HEK293 (cell line): ENCODE measurements at regions of chr10 and their contacts with region 1.

Region 1: DNA sequence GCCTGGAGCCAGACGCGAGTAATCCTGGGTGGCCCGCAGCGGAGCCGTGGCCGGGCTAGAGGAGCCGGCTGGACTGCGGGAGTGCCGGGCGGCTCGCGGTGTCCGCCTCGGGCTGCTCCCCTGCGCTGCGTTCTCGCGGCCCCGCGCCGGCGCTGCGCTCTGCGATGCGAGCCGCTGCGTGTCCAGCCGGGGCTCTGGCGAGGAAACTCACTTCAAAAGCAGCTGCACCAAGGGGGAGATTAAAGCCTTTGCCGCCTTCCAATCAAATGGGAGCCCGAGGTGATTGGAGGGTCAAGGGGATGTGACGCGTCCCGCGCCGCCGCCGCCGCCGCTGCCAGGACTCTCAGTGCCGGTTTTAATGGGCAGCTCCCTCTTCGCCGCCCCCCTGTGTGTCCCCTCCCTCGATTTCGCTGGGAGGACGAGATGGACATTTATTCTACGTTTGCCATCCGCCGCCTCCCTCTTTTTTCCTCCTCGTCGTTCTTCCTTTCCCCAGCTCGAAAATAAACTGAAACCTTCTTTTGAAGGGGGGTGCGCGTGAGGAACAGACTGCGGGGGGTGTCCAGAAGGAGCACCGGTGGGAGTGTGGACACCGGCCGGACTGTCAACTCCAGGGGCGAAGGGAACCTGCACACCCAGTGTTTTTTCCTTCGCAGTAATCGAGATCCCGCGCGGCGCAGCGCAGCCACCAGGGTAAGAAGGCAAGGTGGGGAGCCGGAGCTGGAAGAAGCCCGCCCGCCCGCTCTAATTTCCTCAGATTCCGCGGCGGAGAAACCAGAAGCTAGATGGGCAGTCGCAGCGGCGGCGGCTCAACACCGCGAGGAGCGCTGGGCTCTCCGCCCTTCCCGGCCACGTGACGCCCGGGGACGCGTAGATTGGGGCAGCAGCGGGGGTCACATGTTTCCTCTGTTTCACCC is at the start of gene ZNF503:
- H3K4me3 ChIP-seq: peak within 1 kb of the TSS; percentile 69
- H3K27ac ChIP-seq: peak within 1 kb of the TSS; percentile 100
- H3K4me1 ChIP-seq: no peaks in the 10 kb centered on the region
- CTCF ChIP-seq: peak; percentile 69

Region 2: DNA sequence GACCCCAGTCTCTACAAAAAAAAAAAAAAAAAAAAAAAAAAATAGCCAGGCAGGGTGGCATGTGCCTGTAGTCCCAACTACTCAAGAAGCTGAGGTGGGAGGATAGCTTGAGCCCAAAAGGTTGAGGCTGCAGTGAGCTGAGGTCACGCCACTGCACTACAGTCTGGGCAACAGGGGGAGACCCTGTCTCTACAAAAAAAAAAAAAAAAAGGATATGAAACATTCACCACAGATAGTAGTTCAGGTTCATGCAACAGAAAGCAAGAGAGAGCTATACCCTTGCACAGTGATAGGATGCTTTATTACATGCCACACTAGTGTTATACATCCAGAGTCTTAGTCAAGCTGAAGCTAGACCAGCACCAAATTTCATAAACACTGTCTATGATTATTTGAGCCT is 723.9 kb before region 1 on chr10:
- CTCF ChIA-PET with region 1: no interaction called
- POLR2A ChIA-PET with region 1: no interaction called
- H3K4me3 ChIP-seq: no peak overlapping the region
- H3K27ac ChIP-seq: no peak overlapping the region
- H3K4me1 ChIP-seq: no peaks in the 10 kb centered on the region
- CTCF ChIP-seq: no peak

Region 3: DNA sequence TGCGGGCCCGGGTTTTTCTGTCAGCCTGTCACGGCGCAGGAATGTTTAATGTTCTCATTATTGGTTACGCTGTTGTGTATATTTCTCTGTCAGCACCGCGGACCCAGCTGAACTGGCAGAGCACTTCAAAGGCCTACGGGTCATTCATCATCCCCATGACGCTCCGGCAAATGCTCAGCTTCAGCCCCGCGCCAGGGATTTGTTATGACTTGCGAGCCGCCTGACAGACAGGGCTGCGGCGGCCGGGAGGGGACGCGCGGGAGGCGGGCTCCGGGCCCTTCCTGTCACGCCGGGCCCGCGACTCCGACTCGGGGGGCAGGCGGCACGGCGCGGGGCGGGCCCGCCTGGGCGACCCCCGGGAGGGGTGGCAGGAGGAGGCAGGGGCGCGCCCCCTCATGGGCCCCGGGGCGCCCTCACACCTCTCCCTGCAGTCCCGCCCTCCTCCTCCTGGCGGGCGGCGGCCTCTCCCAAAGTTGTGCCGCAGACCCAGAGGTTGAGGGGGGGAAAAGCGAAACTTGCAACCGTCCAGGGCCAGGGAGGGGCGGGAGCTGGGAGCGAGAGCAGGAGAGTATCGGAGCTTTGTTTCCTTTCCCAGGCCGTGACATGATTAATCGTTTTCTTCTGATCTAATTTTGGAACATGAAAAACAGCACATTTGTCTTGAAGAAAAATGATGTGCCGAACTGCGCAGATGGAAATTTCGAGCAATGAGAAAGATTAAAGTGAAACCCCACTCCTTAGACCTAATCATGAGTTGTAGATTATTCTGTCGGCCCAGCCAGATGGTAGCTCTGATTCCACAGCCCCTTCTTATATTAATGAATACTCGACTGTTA is 106.7 kb before region 1 on chr10:
- CTCF ChIA-PET with region 1: interaction called, 3 read pairs
- POLR2A ChIA-PET with region 1: interaction called, 12 read pairs
- H3K4me3 ChIP-seq: peak overlapping the region; percentile 44
- H3K27ac ChIP-seq: peak overlapping the region; percentile 84
- H3K4me1 ChIP-seq: peaks cover 12% of the 10 kb centered on the region
- CTCF ChIP-seq: peak; percentile 52

Region 4: DNA sequence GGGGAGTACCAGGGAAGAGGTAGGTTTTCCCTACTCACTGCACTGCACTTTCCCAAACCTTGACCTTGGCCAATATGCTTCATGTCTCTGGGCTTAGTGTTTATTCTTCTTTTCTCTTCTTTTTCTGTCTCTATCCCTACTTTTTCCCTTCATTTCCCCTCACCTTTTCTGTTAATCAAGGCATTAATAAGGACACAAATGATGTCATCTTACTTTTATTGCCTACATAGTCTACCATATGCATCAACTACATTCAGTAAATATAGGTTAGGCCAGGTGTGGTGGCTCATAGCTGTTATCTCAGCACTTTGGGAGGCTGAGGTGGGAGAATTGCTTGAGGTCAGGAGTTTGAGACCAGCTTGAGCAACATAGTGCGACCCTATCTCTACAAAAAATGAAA is 12.7 kb after region 1 on chr10:
- CTCF ChIA-PET with region 1: interaction called, 3 read pairs
- POLR2A ChIA-PET with region 1: interaction called, 13 read pairs
- H3K4me3 ChIP-seq: no peak overlapping the region
- H3K27ac ChIP-seq: no peak overlapping the region
- H3K4me1 ChIP-seq: peaks cover 11% of the 10 kb centered on the region
- CTCF ChIP-seq: no peak

Region 5: GRCh38 chr10:75508239-75508813 is 106.5 kb after region 1 on chr10:
- CTCF ChIA-PET with region 1: no interaction called
- POLR2A ChIA-PET with region 1: interaction called, 11 read pairs
- H3K4me3 ChIP-seq: no peak overlapping the region
- H3K27ac ChIP-seq: peak overlapping the region; percentile 90
- H3K4me1 ChIP-seq: peaks cover 28% of the 10 kb centered on the region
- CTCF ChIP-seq: no peak

Region 6: DNA sequence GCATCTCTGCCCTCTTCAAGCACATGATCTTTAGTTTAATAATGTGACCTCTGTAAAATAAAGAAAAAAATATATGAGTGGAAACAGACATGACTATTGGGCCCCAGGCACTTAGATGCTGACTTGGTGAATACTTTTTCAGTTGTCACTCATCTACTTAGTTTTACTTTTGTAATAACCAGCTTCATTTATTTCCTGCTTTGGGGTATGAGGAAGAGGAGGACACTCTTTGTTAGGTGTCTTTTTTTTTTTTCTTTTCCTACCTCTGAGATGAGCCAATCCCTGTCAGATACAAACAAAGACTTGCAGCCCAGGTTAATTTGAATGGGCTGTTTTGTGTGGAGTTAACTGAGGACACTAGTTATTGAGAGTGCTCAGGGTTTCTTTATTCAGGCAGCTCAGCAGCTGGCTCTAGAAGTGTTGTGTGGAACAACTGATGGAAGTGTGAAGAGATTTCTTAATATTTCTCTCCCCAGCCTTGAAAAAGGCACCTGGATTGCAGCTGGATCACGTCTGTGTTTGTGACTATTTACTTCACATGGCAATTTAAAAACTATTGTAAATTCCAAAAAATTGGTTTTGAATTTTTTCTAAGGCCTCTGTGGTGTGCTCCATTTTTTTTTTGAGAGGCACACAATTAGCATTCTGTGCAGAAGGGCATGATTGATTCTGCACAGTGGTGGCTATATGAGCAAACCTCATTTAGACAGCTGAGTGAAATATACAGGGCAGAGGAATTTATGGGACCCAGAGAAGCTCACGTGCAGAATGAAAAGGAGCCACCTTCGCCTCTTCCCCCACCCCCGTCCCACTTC is 363.4 kb after region 1 on chr10:
- CTCF ChIA-PET with region 1: no interaction called
- POLR2A ChIA-PET with region 1: interaction called, 13 read pairs
- H3K4me3 ChIP-seq: no peak overlapping the region
- H3K27ac ChIP-seq: no peak overlapping the region
- H3K4me1 ChIP-seq: peaks cover 28% of the 10 kb centered on the region
- CTCF ChIP-seq: no peak